Activated CD4-positive, alpha-beta T cell treated with anti-CD3 and anti-CD28 coated beads for 36 hours (primary cell): ENCODE measurements at regions of chr11 and their contacts with region 1.

Region 1: GRCh38 chr11:96342961-96343711 is at the start of gene MAML2:
- DNase-seq: peak; percentile 96
- ATAC-seq: peak; percentile 85
- H3K4me3 Mint-ChIP-seq: peak within 1 kb of the TSS; percentile 84
- H3K27ac Mint-ChIP-seq: peak within 1 kb of the TSS; percentile 95
- H3K4me1 Mint-ChIP-seq: peaks cover 26% of the 10 kb centered on the region
- H3K27me3 Mint-ChIP-seq: no peaks in the 10 kb centered on the region
- total RNA-seq, gene MAML2: 23.9 to 37.1 TPM

Region 2: GRCh38 chr11:95923728-95924413 is 419.3 kb before region 1 on chr11 and contains the start of gene MTMR2:
- CTCF ChIA-PET with region 1: interaction called, 3 read pairs
- POLR2A ChIA-PET with region 1: no interaction called
- intact Hi-C with region 1: loop called in 1 of 2 experiments (anchors 5 kb)
- DNase-seq: peak; percentile 75
- ATAC-seq: peak; percentile 93
- H3K4me3 Mint-ChIP-seq: peak within 1 kb of the TSS; percentile 99
- H3K27ac Mint-ChIP-seq: peak within 1 kb of the TSS; percentile 99
- H3K4me1 Mint-ChIP-seq: peaks cover 25% of the 10 kb centered on the region
- H3K27me3 Mint-ChIP-seq: no peaks in the 10 kb centered on the region
- total RNA-seq, gene MTMR2: 32.8 to 36.5 TPM

Region 3: GRCh38 chr11:96062134-96062533 is 281.0 kb before region 1 on chr11:
- CTCF ChIA-PET with region 1: interaction called, 39 read pairs
- POLR2A ChIA-PET with region 1: interaction called, 5 read pairs
- intact Hi-C with region 1: loop called (anchors 2 kb)
- DNase-seq: peak; percentile 65
- ATAC-seq: peak; percentile 87
- H3K4me3 Mint-ChIP-seq: peak overlapping the region; percentile 42
- H3K27ac Mint-ChIP-seq: peak overlapping the region; percentile 94
- H3K4me1 Mint-ChIP-seq: peaks cover 81% of the 10 kb centered on the region
- H3K27me3 Mint-ChIP-seq: no peaks in the 10 kb centered on the region

Region 4: GRCh38 chr11:96207459-96208449 is 135.4 kb before region 1 on chr11:
- CTCF ChIA-PET with region 1: interaction called, 15 read pairs
- POLR2A ChIA-PET with region 1: interaction called, 10 read pairs
- intact Hi-C with region 1: loop called in 1 of 2 experiments (anchors 5 kb)
- DNase-seq: peak; percentile 51
- ATAC-seq: peak; percentile 16
- H3K4me3 Mint-ChIP-seq: peak overlapping the region; percentile 51
- H3K27ac Mint-ChIP-seq: peak overlapping the region; percentile 95
- H3K4me1 Mint-ChIP-seq: peaks cover 93% of the 10 kb centered on the region
- H3K27me3 Mint-ChIP-seq: no peaks in the 10 kb centered on the region

Region 5: DNA sequence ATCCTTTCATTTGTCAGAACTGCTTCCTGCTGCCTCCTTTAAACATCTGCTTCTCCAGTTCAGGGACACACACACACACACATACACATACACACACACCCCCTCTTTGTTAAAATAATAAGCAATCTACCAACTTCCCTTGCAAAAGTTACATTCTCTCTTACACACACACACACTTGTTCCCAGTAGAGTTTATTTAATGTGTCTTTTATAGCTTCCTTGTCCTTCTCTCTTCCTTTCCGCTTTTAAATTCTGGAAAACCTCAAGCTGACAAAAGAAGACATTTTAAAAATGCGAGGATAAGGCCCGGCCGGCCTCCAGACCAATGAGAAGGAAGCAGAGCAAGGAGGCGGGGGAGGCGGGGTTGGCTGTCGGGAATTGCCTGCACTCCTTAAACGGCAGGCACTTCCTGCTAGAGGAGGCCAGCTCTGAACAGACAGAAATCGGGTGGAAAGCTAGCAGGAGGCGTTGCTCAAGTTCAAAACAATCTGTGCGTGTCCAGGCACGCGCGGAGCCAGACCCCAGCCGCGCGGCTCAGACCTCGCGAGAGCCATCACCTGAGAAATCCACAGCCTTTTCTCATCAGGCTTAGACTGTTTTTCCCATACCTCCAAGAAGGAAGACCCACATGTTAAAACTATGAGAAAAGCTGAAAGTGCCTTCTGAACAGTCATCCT is 100.0 kb before region 1 on chr11:
- CTCF ChIA-PET with region 1: interaction called, 38 read pairs
- POLR2A ChIA-PET with region 1: interaction called, 4 read pairs
- intact Hi-C with region 1: loop called in 1 of 2 experiments (anchors 1 kb)
- DNase-seq: peak; percentile 92
- ATAC-seq: peak; percentile 82
- H3K4me3 Mint-ChIP-seq: peak overlapping the region; percentile 73
- H3K27ac Mint-ChIP-seq: peak overlapping the region; percentile 94
- H3K4me1 Mint-ChIP-seq: peaks cover 62% of the 10 kb centered on the region
- H3K27me3 Mint-ChIP-seq: no peaks in the 10 kb centered on the region

Region 6: DNA sequence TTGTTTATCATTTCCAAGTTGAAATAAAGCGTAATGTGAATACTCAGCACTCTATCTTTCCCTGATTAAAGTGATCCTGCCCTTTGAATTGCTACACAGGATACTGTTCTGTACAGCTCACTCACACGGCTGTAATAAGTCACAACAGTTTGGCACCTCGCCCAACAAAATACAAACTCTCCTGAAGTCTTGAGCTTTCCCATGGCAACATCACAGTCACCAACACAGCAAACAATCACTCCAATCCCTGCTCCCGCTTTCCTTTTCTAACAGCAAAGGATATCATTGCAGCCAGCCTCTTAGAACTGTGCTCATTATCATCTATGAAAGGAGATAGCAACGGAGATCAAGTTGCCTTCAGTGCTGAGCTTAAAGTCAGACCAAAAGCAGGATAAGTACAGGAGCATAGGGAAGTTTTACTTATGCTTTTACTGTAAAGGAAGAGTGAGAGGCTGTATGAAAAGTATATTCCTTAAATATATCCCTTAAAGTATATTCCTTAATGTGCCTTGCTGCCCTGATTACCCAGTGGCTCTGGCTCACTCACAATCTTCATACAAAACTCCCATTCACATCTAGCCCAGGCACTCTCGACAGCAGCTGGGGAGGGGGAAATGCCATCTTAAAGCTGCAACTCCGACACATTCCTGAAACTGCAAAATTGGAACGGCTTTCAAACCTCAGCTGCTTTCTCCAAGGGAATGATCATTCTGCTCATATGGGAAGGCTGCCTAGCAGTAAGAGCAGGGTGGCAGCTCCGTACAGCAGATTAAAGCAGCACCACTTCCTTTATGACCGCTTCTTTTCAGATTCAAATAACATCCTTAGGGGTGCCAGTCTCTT is 36.0 kb before region 1 on chr11:
- CTCF ChIA-PET with region 1: interaction called, 69 read pairs
- POLR2A ChIA-PET with region 1: interaction called, 7 read pairs
- intact Hi-C with region 1: no loop called
- DNase-seq: peak; percentile 48
- ATAC-seq: peak; percentile 42
- H3K4me3 Mint-ChIP-seq: peak overlapping the region; percentile 39
- H3K27ac Mint-ChIP-seq: peak overlapping the region; percentile 58
- H3K4me1 Mint-ChIP-seq: peaks cover 79% of the 10 kb centered on the region
- H3K27me3 Mint-ChIP-seq: no peaks in the 10 kb centered on the region

Region 7: DNA sequence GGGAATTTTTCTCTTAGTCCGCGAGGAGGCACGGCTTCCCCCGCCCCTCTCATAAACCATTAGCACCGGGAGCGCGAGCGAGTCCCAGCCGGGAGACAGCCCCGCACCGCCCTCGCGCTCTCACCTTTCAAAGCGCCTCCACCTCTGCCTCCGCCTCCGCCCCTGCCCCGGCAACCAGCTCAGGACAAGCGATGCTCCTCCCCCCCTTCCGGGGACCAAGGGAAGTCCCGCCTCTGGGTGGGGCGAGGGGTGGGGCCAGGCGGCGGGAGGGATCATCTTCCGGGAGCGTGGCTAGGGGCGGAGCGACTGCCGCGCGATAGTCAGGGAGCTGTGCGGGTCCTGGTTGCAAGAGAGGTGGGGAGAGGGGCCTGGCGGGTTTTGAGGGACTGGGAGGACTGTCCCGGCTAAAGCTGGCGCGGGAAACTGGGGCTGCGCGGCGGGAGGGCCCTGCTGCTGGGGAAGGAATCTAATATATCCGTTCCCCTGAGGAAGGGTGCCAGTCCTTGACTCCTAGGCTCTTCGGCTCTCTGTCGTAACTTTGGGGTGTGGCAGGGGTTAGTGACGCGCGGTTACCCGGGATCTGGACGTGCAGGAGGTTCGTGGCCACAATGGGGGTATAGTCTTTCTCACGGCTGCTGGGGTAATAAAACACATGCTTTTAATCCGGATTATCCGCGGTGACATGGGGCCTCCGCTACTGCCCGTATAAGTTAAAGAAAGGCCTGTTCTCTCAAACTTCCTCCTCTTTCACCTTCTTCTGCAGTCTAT is 46.8 kb after region 1 on chr11 and contains the starts of genes CCDC82 and JRKL:
- CTCF ChIA-PET with region 1: interaction called, 20 read pairs
- POLR2A ChIA-PET with region 1: interaction called, 19 read pairs
- intact Hi-C with region 1: loop called (anchors 1 kb)
- DNase-seq: peak; percentile 99
- ATAC-seq: peak; percentile 97
- H3K4me3 Mint-ChIP-seq: peak within 1 kb of the TSS; percentile 90
- H3K27ac Mint-ChIP-seq: peak within 1 kb of the TSS; percentile 82
- H3K4me1 Mint-ChIP-seq: peaks cover 66% of the 10 kb centered on the region
- H3K27me3 Mint-ChIP-seq: no peaks in the 10 kb centered on the region
- total RNA-seq, gene CCDC82: 32.1 to 38.3 TPM
- total RNA-seq, gene JRKL: 12.9 to 15.7 TPM